ENCODE measurements at regions of chr20 and their contacts with region 1.

Region 1: DNA sequence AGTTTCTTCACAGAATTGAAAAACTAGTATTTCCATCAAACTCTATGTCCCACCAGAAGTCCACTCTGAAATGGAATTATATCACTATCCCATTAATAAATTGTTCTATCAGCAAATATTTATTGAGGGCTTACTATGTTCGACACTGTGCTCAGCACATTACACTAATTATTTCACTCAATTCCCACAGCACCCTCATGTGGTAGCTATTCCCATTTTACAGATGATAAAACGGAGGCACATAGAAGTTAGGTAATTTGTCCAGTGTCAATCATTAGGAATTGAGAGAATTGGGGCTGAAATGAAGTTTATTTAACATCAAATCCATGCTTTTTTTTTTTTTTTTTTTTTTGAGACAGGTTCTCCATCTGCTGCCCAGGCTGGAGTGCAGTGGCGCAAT is 52.5 kb downstream of the MKKS start:
- DNase-seq: no peak
- ATAC-seq: no peak
- H3K4me3 ChIP-seq: no peak overlapping the region
- H3K27ac ChIP-seq: no peak overlapping the region
- H3K4me1 ChIP-seq: no peaks in the 10 kb centered on the region
- H3K27me3 ChIP-seq: peaks cover 0 to 6% (median 0%) of the 10 kb centered on the region in 7 donors
- CTCF ChIP-seq: peak in 1 of 9 donors; percentile 16

Region 2: GRCh38 chr20:10316582-10316981 is 64.9 kb before region 1 on chr20:
- intact Hi-C with region 1: loop called in 1 of 10 experiments (anchors 10 kb)
- DNase-seq: no peak
- ATAC-seq: no peak
- H3K4me3 ChIP-seq: no peak overlapping the region
- H3K27ac ChIP-seq: no peak overlapping the region
- H3K4me1 ChIP-seq: peaks cover 0 to 18% (median 4%) of the 10 kb centered on the region in 9 donors
- H3K27me3 ChIP-seq: peaks cover 0 to 3% (median 0%) of the 10 kb centered on the region in 7 donors
- CTCF ChIP-seq: peak in 5 of 9 donors; percentile 16 to 39 (median 24)

Region 3: DNA sequence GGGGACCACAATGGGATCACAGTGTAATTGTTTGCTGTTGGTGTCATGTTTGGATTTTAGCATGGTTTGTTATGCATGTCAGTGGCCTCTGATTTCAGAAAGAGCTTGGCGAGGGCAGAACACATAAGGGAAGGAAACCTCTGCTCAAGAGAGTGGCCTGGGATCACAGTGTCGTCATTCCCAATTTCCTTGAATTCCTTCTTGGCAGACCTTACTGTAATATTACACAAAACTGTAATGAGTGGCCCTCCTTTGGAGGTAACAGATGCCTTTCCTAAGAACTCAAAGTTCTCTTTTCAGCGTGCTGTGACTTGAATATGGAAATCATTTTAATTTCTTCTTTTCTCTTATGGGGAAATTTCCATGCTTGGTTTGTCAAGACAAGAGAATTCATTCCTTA is 245.4 kb after region 1 on chr20:
- intact Hi-C with region 1: no loop called
- DNase-seq: no peak
- ATAC-seq: peak in 6 of 8 donors; percentile 43 to 80 (median 58)
- H3K4me3 ChIP-seq: no peak overlapping the region
- H3K27ac ChIP-seq: peak overlapping the region in 1 of 10 donors; percentile 21
- H3K4me1 ChIP-seq: peaks cover 0 to 42% (median 18%) of the 10 kb centered on the region in 9 donors
- H3K27me3 ChIP-seq: no peaks in the 10 kb centered on the region
- CTCF ChIP-seq: no peak